T-cell (primary cell): ENCODE measurements at regions of chr7 and their contacts with region 1.

Region 1: GRCh38 chr7:130982160-130982638 is 248.2 kb upstream of the KLF14 start:
- DNase-seq: peak in 7 of 35 experiments; percentile 17 to 73 (median 20)
- ATAC-seq: peak; percentile 68 to 81 (median 77)
- H3K4me3 ChIP-seq: no peak overlapping the region
- H3K4me3 Mint-ChIP-seq: no peak overlapping the region
- H3K27ac ChIP-seq: peak overlapping the region; percentile 79
- H3K27ac Mint-ChIP-seq: no peak overlapping the region
- H3K4me1 ChIP-seq: peaks cover 0 to 48% of the 10 kb centered on the region in 2 experiments
- H3K4me1 Mint-ChIP-seq: peaks cover 42 to 54% (median 50%) of the 10 kb centered on the region in 3 donors
- H3K27me3 ChIP-seq: no peaks in the 10 kb centered on the region
- H3K27me3 Mint-ChIP-seq: no peaks in the 10 kb centered on the region

Region 2: DNA sequence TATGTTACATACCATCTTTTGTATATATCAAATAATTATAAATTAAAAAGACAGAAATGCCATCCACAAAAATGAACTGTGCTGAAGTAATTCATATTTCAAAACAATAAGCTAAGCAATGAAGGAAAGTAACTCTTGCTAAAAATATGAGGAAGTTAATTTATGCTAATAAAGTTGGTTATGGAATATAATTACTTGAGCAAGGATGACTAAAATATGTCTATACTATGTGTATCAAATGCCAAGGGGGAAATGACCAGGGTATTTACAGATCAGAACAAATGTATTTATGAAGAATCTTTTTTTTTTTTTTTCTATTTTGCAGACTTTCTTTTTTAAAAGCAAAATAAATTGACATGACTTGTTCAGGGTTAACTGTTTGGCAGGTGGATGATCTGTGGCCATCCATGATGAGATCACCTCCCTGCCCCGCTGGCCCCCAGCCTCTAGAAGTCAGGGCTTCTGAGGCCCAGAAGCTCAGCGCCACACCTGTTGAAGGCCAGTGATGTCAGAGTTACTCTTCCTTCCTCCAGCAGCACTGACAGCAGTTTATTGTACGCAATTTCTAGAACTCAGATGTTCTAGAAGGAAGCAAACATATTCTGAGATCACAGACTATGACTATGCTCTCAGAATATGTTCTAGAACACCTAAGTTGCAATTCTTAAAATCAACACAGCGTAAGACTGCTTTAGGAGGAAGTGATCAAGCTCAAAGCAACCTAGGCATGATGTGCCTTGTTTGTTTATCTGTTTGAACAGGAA is 52.1 kb before region 1 on chr7:
- CTCF ChIA-PET with region 1: interaction called, 5 to 12 read pairs
- POLR2A ChIA-PET with region 1: interaction called in 1 of 2 experiments, 4 read pairs
- DNase-seq: peak in 21 of 35 experiments; percentile 21 to 64 (median 33)
- ATAC-seq: peak; percentile 32 to 53 (median 47)
- H3K4me3 ChIP-seq: no peak overlapping the region
- H3K4me3 Mint-ChIP-seq: peak overlapping the region in 2 of 3 donors; percentile 45 to 54
- H3K27ac ChIP-seq: peak overlapping the region; percentile 47
- H3K27ac Mint-ChIP-seq: peak overlapping the region; percentile 87 to 95
- H3K4me1 ChIP-seq: peaks cover 4 to 61% of the 10 kb centered on the region in 2 experiments
- H3K4me1 Mint-ChIP-seq: peaks cover 92 to 96% (median 95%) of the 10 kb centered on the region in 3 donors
- H3K27me3 ChIP-seq: no peaks in the 10 kb centered on the region
- H3K27me3 Mint-ChIP-seq: no peaks in the 10 kb centered on the region

Region 3: GRCh38 chr7:130961128-130961601 is 21.0 kb before region 1 on chr7:
- CTCF ChIA-PET with region 1: interaction called, 4 to 17 read pairs
- POLR2A ChIA-PET with region 1: interaction called, 3 to 4 read pairs
- DNase-seq: peak in 33 of 35 experiments; percentile 26 to 92 (median 75)
- ATAC-seq: peak; percentile 78 to 84 (median 81)
- H3K4me3 ChIP-seq: peak overlapping the region in 1 of 2 donors; percentile 45
- H3K4me3 Mint-ChIP-seq: peak overlapping the region; percentile 79 to 90 (median 87)
- H3K27ac ChIP-seq: peak overlapping the region; percentile 97
- H3K27ac Mint-ChIP-seq: peak overlapping the region; percentile 96
- H3K4me1 ChIP-seq: peaks cover 31 to 57% of the 10 kb centered on the region in 2 experiments
- H3K4me1 Mint-ChIP-seq: peaks cover 42 to 75% (median 72%) of the 10 kb centered on the region in 3 donors
- H3K27me3 ChIP-seq: no peaks in the 10 kb centered on the region
- H3K27me3 Mint-ChIP-seq: no peaks in the 10 kb centered on the region

Region 4: DNA sequence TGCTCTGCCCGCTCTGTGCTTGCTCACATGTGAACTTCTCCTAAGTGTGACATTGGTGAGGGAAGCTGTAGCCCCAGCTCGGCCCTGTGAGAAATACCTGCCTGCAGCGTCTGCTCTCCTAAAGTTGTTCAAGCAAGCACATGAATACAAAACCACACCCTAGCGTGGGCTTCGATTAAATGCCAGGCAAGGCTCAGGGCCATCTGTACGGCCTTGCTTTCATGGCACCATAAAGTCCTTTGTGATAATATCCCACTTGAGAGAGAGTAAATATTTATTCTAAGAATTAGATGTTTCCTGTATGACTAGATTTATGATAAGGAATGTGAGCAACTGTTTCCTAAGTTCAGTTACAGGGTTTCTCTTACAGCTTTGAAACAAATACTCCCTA is 14.6 kb after region 1 on chr7:
- CTCF ChIA-PET with region 1: interaction called, 3 to 34 read pairs
- POLR2A ChIA-PET with region 1: interaction called in 1 of 2 experiments, 3 read pairs
- DNase-seq: no peak
- ATAC-seq: peak; percentile 24 to 58 (median 52)
- H3K4me3 ChIP-seq: no peak overlapping the region
- H3K4me3 Mint-ChIP-seq: peak overlapping the region; percentile 37 to 60 (median 59)
- H3K27ac ChIP-seq: peak overlapping the region; percentile 62
- H3K27ac Mint-ChIP-seq: peak overlapping the region; percentile 89 to 92
- H3K4me1 ChIP-seq: peaks cover 0 to 62% of the 10 kb centered on the region in 2 experiments
- H3K4me1 Mint-ChIP-seq: peaks cover 70 to 92% (median 86%) of the 10 kb centered on the region in 3 donors
- H3K27me3 ChIP-seq: no peaks in the 10 kb centered on the region
- H3K27me3 Mint-ChIP-seq: no peaks in the 10 kb centered on the region

Region 5: DNA sequence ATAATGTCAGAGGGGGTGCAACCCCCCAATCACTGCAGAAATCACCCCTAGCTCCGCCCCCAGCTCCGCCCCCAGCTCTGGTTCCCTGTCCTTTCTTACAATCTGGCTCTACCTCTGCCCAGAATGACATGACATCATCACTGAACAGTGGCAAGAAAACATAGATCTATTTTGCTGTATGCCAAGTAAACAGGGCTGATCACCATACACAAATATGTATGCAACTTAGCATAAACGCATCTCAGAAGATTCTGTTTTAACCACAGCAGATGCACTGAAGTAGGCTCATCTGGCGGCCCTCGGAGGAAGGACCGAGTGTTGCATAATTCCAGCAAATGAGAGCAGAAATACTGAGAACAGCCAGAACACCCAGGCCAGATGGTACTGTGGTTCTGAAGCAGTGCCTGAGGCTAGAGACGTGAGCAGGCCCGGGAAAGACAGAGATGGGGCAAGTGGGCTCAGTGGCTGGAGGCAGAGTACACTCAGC is 45.1 kb after region 1 on chr7:
- CTCF ChIA-PET with region 1: interaction called, 5 to 11 read pairs
- POLR2A ChIA-PET with region 1: interaction called in 1 of 2 experiments, 6 read pairs
- DNase-seq: peak in 19 of 35 experiments; percentile 28 to 60 (median 40)
- ATAC-seq: peak; percentile 38 to 62 (median 50)
- H3K4me3 ChIP-seq: no peak overlapping the region
- H3K4me3 Mint-ChIP-seq: peak overlapping the region; percentile 19 to 41 (median 38)
- H3K27ac ChIP-seq: peak overlapping the region; percentile 66
- H3K27ac Mint-ChIP-seq: peak overlapping the region; percentile 80
- H3K4me1 ChIP-seq: peaks cover 0 to 63% of the 10 kb centered on the region in 2 experiments
- H3K4me1 Mint-ChIP-seq: peaks cover 86 to 92% (median 88%) of the 10 kb centered on the region in 3 donors
- H3K27me3 ChIP-seq: no peaks in the 10 kb centered on the region
- H3K27me3 Mint-ChIP-seq: no peaks in the 10 kb centered on the region

Region 6: GRCh38 chr7:131051304-131051703 is 69.1 kb after region 1 on chr7:
- CTCF ChIA-PET with region 1: no interaction called
- POLR2A ChIA-PET with region 1: no interaction called
- DNase-seq: no peak
- ATAC-seq: peak in 1 of 4 experiments; percentile 27
- H3K4me3 ChIP-seq: no peak overlapping the region
- H3K4me3 Mint-ChIP-seq: no peak overlapping the region
- H3K27ac ChIP-seq: peak overlapping the region; percentile 21
- H3K27ac Mint-ChIP-seq: peak overlapping the region; percentile 6 to 46
- H3K4me1 ChIP-seq: peaks cover 12 to 58% of the 10 kb centered on the region in 2 experiments
- H3K4me1 Mint-ChIP-seq: peaks cover 76 to 80% (median 79%) of the 10 kb centered on the region in 3 donors
- H3K27me3 ChIP-seq: no peaks in the 10 kb centered on the region
- H3K27me3 Mint-ChIP-seq: no peaks in the 10 kb centered on the region

Region 7: GRCh38 chr7:131117439-131117838 is 135.2 kb after region 1 on chr7:
- CTCF ChIA-PET with region 1: no interaction called
- POLR2A ChIA-PET with region 1: no interaction called
- DNase-seq: no peak
- ATAC-seq: no peak
- H3K4me3 ChIP-seq: no peak overlapping the region
- H3K4me3 Mint-ChIP-seq: no peak overlapping the region
- H3K27ac ChIP-seq: no peak overlapping the region
- H3K27ac Mint-ChIP-seq: no peak overlapping the region
- H3K4me1 ChIP-seq: no peaks in the 10 kb centered on the region
- H3K4me1 Mint-ChIP-seq: peaks cover 3 to 9% (median 7%) of the 10 kb centered on the region in 3 donors
- H3K27me3 ChIP-seq: no peaks in the 10 kb centered on the region
- H3K27me3 Mint-ChIP-seq: no peaks in the 10 kb centered on the region